SK-N-SH (cell line): ENCODE measurements at regions of chr19 and their contacts with region 1.

Region 1: GRCh38 chr19:45125926-45126493 is 33.0 kb downstream of the PPP1R37 start:
- DNase-seq: peak; percentile 68
- H3K4me3 ChIP-seq: no peak overlapping the region
- H3K27ac ChIP-seq: no peak overlapping the region; a peak in 1 of 4 replicates
- H3K4me1 ChIP-seq: peaks cover 0 to 23% of the 10 kb centered on the region in 2 experiments; a peak in 1 of 4 replicates
- H3K27me3 ChIP-seq: no peaks in the 10 kb centered on the region
- CTCF ChIP-seq: peak; percentile 74
- EP300 ChIP-seq: no peak
- RAD21 ChIP-seq: peak; percentile 55

Region 2: GRCh38 chr19:45038931-45039893 is 86.8 kb before region 1 on chr19 and contains the start of gene CLASRP:
- CTCF ChIA-PET with region 1: no interaction called
- POLR2A ChIA-PET with region 1: no interaction called
- DNase-seq: peak; percentile 98
- H3K4me3 ChIP-seq: peak within 1 kb of the TSS; percentile 72 to 90
- H3K27ac ChIP-seq: peak within 1 kb of the TSS; percentile 88 to 93
- H3K4me1 ChIP-seq: peaks cover 10 to 11% of the 10 kb centered on the region in 2 experiments; a peak in 3 of 4 replicates
- H3K27me3 ChIP-seq: no peaks in the 10 kb centered on the region
- CTCF ChIP-seq: no peak
- EP300 ChIP-seq: no peak
- RAD21 ChIP-seq: no peak
- polyA plus RNA-seq, gene CLASRP: 53.8 and 54.8 TPM in 2 replicates

Region 3: GRCh38 chr19:45079063-45079910 is 46.7 kb before region 1 on chr19 and contains the start of gene GEMIN7:
- CTCF ChIA-PET with region 1: no interaction called
- POLR2A ChIA-PET with region 1: no interaction called
- DNase-seq: peak; percentile 96
- H3K4me3 ChIP-seq: peak within 1 kb of the TSS; percentile 84 to 99
- H3K27ac ChIP-seq: peak within 1 kb of the TSS; percentile 68 to 71
- H3K4me1 ChIP-seq: peaks cover 0 to 9% of the 10 kb centered on the region in 2 experiments; a peak in 1 of 4 replicates
- H3K27me3 ChIP-seq: no peaks in the 10 kb centered on the region
- CTCF ChIP-seq: no peak; the same call in 1 of the 2 replicates
- EP300 ChIP-seq: 0 out of 4 replicates have a peak, but pooled peaks of 1 of the 2 experiments have one; percentile 14
- RAD21 ChIP-seq: no peak
- polyA plus RNA-seq, gene GEMIN7: 24.2 and 28.7 TPM in 2 replicates

Region 4: DNA sequence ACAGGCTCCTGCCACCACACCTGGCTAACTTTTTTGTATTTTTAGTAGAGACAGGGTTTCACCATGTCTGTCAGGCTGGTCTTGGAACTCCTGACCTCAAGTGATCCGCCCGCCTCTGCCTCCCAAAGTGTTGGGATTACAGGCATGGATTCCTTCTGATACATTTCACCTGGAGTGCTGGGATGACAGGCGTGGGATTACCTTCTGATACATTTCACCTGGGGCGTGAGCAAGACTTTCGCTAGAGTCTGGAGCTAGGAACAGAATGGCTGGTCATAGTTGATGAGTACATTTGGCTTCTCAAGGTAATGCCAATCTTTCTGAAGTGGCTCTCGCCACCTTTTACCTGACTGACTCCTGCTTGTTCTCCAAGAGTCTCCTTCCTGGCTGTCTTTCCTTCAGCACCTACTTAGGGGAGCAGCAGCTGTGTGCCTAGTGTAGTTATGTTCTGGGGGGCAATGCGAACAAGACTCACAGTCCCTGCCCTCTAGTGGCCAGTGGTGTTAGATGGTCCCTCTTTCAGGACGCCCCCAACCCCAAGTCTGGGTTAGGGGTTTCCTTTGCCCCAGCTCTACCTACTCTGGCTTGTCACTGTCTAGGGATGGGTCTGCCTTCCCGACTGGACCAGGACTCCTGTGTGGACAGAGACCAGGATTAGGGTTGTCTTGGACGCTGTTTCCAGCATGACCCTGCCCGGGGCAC is 13.7 kb before region 1 on chr19:
- CTCF ChIA-PET with region 1: interaction called, 10 read pairs
- POLR2A ChIA-PET with region 1: no interaction called
- DNase-seq: no peak
- H3K4me3 ChIP-seq: no peak overlapping the region
- H3K27ac ChIP-seq: no peak overlapping the region
- H3K4me1 ChIP-seq: peaks cover 0 to 4% of the 10 kb centered on the region in 2 experiments; a peak in 1 of 4 replicates
- H3K27me3 ChIP-seq: no peaks in the 10 kb centered on the region
- CTCF ChIP-seq: no peak
- EP300 ChIP-seq: no peak
- RAD21 ChIP-seq: no peak

Region 5: GRCh38 chr19:45137179-45137761 is 11.3 kb after region 1 on chr19:
- CTCF ChIA-PET with region 1: interaction called, 24 read pairs
- POLR2A ChIA-PET with region 1: no interaction called
- DNase-seq: peak; percentile 63
- H3K4me3 ChIP-seq: no peak overlapping the region
- H3K27ac ChIP-seq: peak overlapping the region in 1 of 2 experiments; percentile 75; a peak in 2 of 4 replicates
- H3K4me1 ChIP-seq: peaks cover 0 to 23% of the 10 kb centered on the region in 2 experiments; a peak in 1 of 4 replicates
- H3K27me3 ChIP-seq: no peaks in the 10 kb centered on the region
- CTCF ChIP-seq: no peak
- EP300 ChIP-seq: no peak
- RAD21 ChIP-seq: no peak

Region 6: DNA sequence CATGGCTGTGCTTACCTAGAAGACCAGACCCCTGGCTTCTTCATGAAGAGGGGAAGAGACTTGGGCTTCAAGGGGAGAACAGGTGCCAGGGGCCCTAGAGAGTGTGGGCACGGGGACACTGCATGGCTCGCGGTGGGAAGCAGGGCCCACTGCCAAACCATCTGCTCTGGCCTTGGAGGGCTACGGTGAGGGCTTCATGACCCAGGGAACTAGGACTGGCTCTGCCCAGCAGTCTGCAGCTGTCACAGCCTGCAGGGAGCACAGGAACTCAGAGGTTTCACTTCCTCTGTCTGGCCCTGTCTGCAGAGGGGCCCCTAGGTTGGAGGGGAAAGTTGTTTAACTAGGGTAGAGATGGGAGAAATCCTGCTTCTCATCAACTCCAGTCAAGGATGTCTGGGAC is 293.4 kb after region 1 on chr19:
- CTCF ChIA-PET with region 1: no interaction called
- POLR2A ChIA-PET with region 1: no interaction called
- DNase-seq: no peak
- H3K4me3 ChIP-seq: no peak overlapping the region
- H3K27ac ChIP-seq: no peak overlapping the region
- H3K4me1 ChIP-seq: peaks cover 7 to 11% of the 10 kb centered on the region in 2 experiments; a peak in 3 of 4 replicates
- H3K27me3 ChIP-seq: no peaks in the 10 kb centered on the region
- CTCF ChIP-seq: no peak
- EP300 ChIP-seq: no peak
- RAD21 ChIP-seq: no peak